Vagina (tissue), 2 donors: ENCODE measurements at regions of chr6 and their contacts with region 1.

Region 1: GRCh38 chr6:90098001-90098531 is 198.6 kb downstream of the BACH2 start:
- DNase-seq: peak in 1 of 2 donors; percentile 95
- H3K4me3 ChIP-seq: no peak overlapping the region
- H3K27ac ChIP-seq: peak overlapping the region; percentile 54
- H3K4me1 ChIP-seq: peaks cover 20% of the 10 kb centered on the region
- H3K27me3 ChIP-seq: no peaks in the 10 kb centered on the region
- CTCF ChIP-seq: peak in 2 of 3 experiments; percentile 17 to 20
- POLR2A ChIP-seq: no peak

Region 2: GRCh38 chr6:90296346-90297114 is 198.5 kb after region 1 on chr6 and contains the start of gene BACH2:
- intact Hi-C with region 1: loop called (anchors 10 kb)
- DNase-seq: no peak
- H3K4me3 ChIP-seq: peak within 1 kb of the TSS; percentile 84 to 95
- H3K27ac ChIP-seq: peak within 1 kb of the TSS; percentile 91
- H3K4me1 ChIP-seq: peaks cover 17% of the 10 kb centered on the region
- H3K27me3 ChIP-seq: no peaks in the 10 kb centered on the region
- CTCF ChIP-seq: no peak
- POLR2A ChIP-seq: peak in 1 of 2 donors; percentile 38
- total RNA-seq, gene BACH2: 6.4 TPM